H1 (cell line): ENCODE measurements at regions of chr14 and their contacts with region 1.

Region 1: DNA sequence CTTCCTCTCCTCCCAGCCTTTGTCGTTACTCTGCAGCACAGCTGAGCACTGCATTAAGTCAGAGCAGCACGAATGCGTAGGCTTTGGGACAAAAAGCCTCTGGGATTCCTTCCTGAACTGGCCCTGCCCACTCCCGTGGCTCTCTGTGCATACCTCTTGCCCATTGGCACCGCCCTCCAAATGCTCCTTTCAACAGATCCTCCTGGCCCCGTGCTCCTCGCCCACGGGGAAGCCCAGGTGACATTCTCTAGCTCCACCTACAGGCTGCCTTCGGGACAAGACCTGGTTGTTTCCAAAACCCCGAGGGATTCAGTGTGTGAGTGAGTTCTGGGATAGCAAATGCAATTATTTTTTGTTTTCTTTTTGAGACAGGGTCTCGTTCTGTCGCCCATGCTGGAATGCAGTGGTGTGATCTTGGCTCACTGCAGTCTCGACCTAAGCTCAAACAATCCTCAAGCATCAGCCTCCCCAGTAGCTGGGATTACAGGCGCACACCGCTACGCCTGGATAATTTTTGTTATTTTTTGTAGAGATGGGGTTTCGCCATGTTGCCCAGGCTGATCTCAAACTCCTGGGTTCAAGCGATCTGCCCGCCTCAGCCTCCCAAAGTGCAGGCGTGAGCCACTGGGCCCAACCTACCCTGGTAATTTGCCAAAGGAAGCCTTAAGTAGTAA is 17.9 kb upstream of the TDRD9 start:
- DNase-seq: peak; percentile 76 to 85
- H3K4me3 ChIP-seq: peak overlapping the region in 1 of 4 experiments; percentile 23; a peak in 2 of 8 replicates
- H3K27ac ChIP-seq: no peak overlapping the region
- H3K4me1 ChIP-seq: peaks cover 0 to 5% (median 3%) of the 10 kb centered on the region in 4 experiments; a peak in 5 of 7 replicates
- H3K27me3 ChIP-seq: no peaks in the 10 kb centered on the region
- CTCF ChIP-seq: peak; percentile 81 to 88 (median 87)
- EP300 ChIP-seq: no peak
- POLR2A ChIP-seq: 0 out of 3 replicates have a peak, but pooled peaks of 1 of the 2 experiments have one; percentile 42
- RAD21 ChIP-seq: peak; percentile 87 to 89

Region 2: GRCh38 chr14:103788086-103788485 is 122.3 kb before region 1 on chr14:
- CTCF ChIA-PET with region 1: interaction called, 13 read pairs
- POLR2A ChIA-PET with region 1: no interaction called
- DNase-seq: no peak
- H3K4me3 ChIP-seq: no peak overlapping the region
- H3K27ac ChIP-seq: no peak overlapping the region
- H3K4me1 ChIP-seq: no peaks in the 10 kb centered on the region
- H3K27me3 ChIP-seq: no peaks in the 10 kb centered on the region
- CTCF ChIP-seq: no peak
- EP300 ChIP-seq: no peak
- POLR2A ChIP-seq: no peak
- RAD21 ChIP-seq: no peak

Region 3: GRCh38 chr14:103889313-103890051 is 20.9 kb before region 1 on chr14:
- CTCF ChIA-PET with region 1: interaction called, 17 read pairs
- POLR2A ChIA-PET with region 1: no interaction called
- DNase-seq: no peak
- H3K4me3 ChIP-seq: no peak overlapping the region
- H3K27ac ChIP-seq: no peak overlapping the region
- H3K4me1 ChIP-seq: peaks cover 0 to 9% (median 3%) of the 10 kb centered on the region in 4 experiments; a peak in 3 of 7 replicates
- H3K27me3 ChIP-seq: no peaks in the 10 kb centered on the region
- CTCF ChIP-seq: no peak
- EP300 ChIP-seq: no peak
- POLR2A ChIP-seq: no peak
- RAD21 ChIP-seq: no peak

Region 4: DNA sequence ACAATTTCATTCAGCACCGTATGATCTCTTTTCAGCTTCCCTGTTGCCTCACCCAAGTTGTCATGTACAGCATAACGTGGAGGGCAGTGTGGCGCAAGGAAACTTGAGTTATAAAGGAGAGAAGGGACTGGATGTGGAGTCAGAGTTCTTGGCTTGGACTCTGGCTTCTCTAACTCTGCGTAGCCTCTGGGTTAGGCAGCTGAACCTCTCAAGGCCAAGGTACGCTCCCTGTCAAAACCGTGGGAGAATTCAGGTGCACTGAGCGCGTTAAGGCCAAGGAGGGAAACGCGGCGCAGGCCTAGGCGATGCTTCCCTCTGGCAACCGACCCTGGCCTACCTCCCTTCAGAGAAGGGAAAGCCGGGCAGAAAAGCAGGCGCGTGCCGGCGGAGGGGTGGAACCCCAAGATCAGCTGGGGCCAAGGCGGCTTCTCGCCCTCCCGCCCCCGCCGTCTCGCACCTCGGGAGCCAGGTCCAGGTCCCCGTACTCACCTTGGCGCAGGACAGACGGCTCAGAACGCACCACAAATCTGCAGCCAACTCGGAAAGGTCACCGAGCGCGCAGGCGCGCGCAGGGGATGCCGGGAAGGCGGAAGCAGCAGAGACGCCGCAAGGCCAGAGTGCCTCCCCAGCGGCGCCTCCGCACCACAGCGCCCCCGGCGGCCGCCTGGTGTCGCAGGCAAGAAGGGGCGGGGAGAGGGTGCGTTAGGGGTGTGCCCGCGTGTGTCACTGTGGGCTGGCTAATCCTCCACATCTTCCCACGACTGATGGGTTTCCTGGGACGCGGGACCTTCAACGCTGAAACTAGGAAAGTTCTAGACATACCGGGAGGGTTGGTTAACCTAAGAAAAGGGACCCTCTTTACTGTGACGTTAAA is 10.8 kb after region 1 on chr14:
- CTCF ChIA-PET with region 1: interaction called, 22 read pairs
- POLR2A ChIA-PET with region 1: interaction called, 7 read pairs
- DNase-seq: peak; percentile 74 to 96
- H3K4me3 ChIP-seq: peak overlapping the region; percentile 86 to 98 (median 94)
- H3K27ac ChIP-seq: peak overlapping the region; percentile 67
- H3K4me1 ChIP-seq: 0 out of 7 replicates have a peak, but pooled peaks cover 0 to 4% (median 0%) of the 10 kb centered on the region in 4 experiments
- H3K27me3 ChIP-seq: no peaks in the 10 kb centered on the region
- CTCF ChIP-seq: peak; percentile 96 to 97 (median 96)
- EP300 ChIP-seq: no peak
- POLR2A ChIP-seq: peak in 1 of 2 experiments; percentile 87; a peak in 2 of 3 replicates
- RAD21 ChIP-seq: peak; percentile 28 to 46; a peak in 3 of 4 replicates

Region 5: GRCh38 chr14:103984196-103984595 is 73.8 kb after region 1 on chr14:
- CTCF ChIA-PET with region 1: interaction called, 17 read pairs
- POLR2A ChIA-PET with region 1: no interaction called
- DNase-seq: no peak
- H3K4me3 ChIP-seq: no peak overlapping the region
- H3K27ac ChIP-seq: no peak overlapping the region
- H3K4me1 ChIP-seq: no peaks in the 10 kb centered on the region
- H3K27me3 ChIP-seq: no peaks in the 10 kb centered on the region
- CTCF ChIP-seq: no peak
- EP300 ChIP-seq: no peak
- POLR2A ChIP-seq: no peak
- RAD21 ChIP-seq: no peak